K562 (cell line): ENCODE measurements at regions of chr9 and their contacts with region 1.

Region 1: DNA sequence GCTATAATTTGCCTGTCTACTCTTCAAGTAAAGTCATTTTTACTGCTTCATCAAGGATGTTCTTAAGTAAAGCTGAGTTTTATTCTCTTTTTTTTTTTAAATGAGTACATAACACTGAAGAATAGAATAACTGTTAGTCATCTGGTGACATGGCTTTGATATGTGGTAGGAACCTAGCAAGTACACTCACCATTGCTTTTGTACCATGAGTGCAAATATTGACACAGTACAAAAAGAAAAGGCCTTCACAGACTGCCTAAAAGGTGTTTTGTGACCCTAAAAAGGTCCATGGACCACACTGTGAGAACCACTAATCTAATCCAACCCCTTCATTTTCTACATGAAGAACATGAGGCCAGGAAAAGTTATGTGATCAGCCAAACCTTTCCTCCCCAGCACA is 55.0 kb downstream of the ECPAS start:
- DNase-seq: no peak
- ATAC-seq: no peak
- H3K4me3 ChIP-seq: no peak overlapping the region
- H3K27ac ChIP-seq: no peak overlapping the region
- H3K4me1 ChIP-seq: 0 out of 5 replicates have a peak, but pooled peaks cover 0 to 2% of the 10 kb centered on the region in 2 experiments
- H3K27me3 ChIP-seq: no peaks in the 10 kb centered on the region
- CTCF ChIP-seq: no peak
- EP300 ChIP-seq: no peak
- POLR2A ChIP-seq: no peak
- RAD21 ChIP-seq: no peak

Region 2: DNA sequence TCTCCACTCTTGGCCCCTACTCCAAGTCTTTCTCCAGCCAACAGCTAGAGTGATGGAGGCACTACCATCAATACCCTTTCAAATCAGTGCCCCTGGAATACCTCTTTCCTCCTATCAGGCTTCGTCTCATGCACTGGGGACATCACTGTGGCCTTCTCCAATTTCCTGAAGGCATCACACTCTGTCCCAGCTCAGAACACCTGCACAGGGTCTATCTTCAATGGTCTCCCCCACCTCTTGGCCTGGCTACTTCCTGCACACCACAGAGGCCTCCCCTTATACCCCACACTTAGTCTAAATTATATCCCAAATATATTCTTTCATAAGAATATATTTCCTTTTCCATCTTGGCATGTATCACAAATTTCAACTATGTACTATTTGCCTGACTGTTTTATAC is 20.5 kb after region 1 on chr9:
- CTCF ChIA-PET with region 1: no interaction called
- POLR2A ChIA-PET with region 1: no interaction called
- in situ Hi-C with region 1: no loop called
- intact Hi-C with region 1: loop called (anchors 2 kb)
- DNase-seq: no peak
- ATAC-seq: no peak
- H3K4me3 ChIP-seq: no peak overlapping the region
- H3K27ac ChIP-seq: no peak overlapping the region
- H3K4me1 ChIP-seq: no peaks in the 10 kb centered on the region
- H3K27me3 ChIP-seq: no peaks in the 10 kb centered on the region
- CTCF ChIP-seq: no peak
- EP300 ChIP-seq: no peak
- POLR2A ChIP-seq: no peak
- RAD21 ChIP-seq: no peak

Region 3: GRCh38 chr9:111516061-111516465 is 86.9 kb after region 1 on chr9:
- CTCF ChIA-PET with region 1: no interaction called
- POLR2A ChIA-PET with region 1: no interaction called
- in situ Hi-C with region 1: no loop called
- intact Hi-C with region 1: no loop called
- DNase-seq: peak in 1 of 4 experiments; percentile 25
- ATAC-seq: peak; percentile 87
- H3K4me3 ChIP-seq: no peak overlapping the region
- H3K27ac ChIP-seq: no peak overlapping the region
- H3K4me1 ChIP-seq: no peaks in the 10 kb centered on the region
- H3K27me3 ChIP-seq: peaks cover 3 to 19% of the 10 kb centered on the region in 2 experiments; a peak in 3 of 5 replicates
- CTCF ChIP-seq: no peak
- EP300 ChIP-seq: no peak
- POLR2A ChIP-seq: no peak
- RAD21 ChIP-seq: no peak